Endothelial cell of umbilical vein (primary cell): ENCODE measurements at regions of chr2 and their contacts with region 1.

Region 1: GRCh38 chr2:10434886-10435819 is 13.0 kb downstream of the ODC1 start:
- DNase-seq: peak; percentile 74
- H3K4me3 ChIP-seq: no peak overlapping the region
- H3K27ac ChIP-seq: no peak overlapping the region
- H3K4me1 ChIP-seq: no peaks in the 10 kb centered on the region
- H3K27me3 ChIP-seq: no peaks in the 10 kb centered on the region
- CTCF ChIP-seq: peak; percentile 96
- POLR2A ChIP-seq: no peak

Region 2: GRCh38 chr2:9984217-9984739 is 450.9 kb before region 1 on chr2:
- CTCF ChIA-PET with region 1: interaction called, 20 read pairs
- POLR2A ChIA-PET with region 1: no interaction called
- dilution Hi-C with region 1: no loop called
- intact Hi-C with region 1: no loop called
- DNase-seq: peak; percentile 73
- H3K4me3 ChIP-seq: no peak overlapping the region
- H3K27ac ChIP-seq: no peak overlapping the region
- H3K4me1 ChIP-seq: peaks cover 5% of the 10 kb centered on the region
- H3K27me3 ChIP-seq: no peaks in the 10 kb centered on the region
- CTCF ChIP-seq: peak; percentile 46 to 60
- POLR2A ChIP-seq: no peak

Region 3: GRCh38 chr2:10072656-10073480 is 362.3 kb before region 1 on chr2:
- CTCF ChIA-PET with region 1: interaction called, 565 read pairs
- POLR2A ChIA-PET with region 1: interaction called, 6 read pairs
- dilution Hi-C with region 1: no loop called
- intact Hi-C with region 1: loop called (anchors 1 kb)
- DNase-seq: peak; percentile 76
- H3K4me3 ChIP-seq: no peak overlapping the region
- H3K27ac ChIP-seq: no peak overlapping the region
- H3K4me1 ChIP-seq: no peaks in the 10 kb centered on the region
- H3K27me3 ChIP-seq: peaks cover 11 to 14% of the 10 kb centered on the region in 2 experiments
- CTCF ChIP-seq: peak; percentile 87 to 90
- POLR2A ChIP-seq: no peak

Region 4: DNA sequence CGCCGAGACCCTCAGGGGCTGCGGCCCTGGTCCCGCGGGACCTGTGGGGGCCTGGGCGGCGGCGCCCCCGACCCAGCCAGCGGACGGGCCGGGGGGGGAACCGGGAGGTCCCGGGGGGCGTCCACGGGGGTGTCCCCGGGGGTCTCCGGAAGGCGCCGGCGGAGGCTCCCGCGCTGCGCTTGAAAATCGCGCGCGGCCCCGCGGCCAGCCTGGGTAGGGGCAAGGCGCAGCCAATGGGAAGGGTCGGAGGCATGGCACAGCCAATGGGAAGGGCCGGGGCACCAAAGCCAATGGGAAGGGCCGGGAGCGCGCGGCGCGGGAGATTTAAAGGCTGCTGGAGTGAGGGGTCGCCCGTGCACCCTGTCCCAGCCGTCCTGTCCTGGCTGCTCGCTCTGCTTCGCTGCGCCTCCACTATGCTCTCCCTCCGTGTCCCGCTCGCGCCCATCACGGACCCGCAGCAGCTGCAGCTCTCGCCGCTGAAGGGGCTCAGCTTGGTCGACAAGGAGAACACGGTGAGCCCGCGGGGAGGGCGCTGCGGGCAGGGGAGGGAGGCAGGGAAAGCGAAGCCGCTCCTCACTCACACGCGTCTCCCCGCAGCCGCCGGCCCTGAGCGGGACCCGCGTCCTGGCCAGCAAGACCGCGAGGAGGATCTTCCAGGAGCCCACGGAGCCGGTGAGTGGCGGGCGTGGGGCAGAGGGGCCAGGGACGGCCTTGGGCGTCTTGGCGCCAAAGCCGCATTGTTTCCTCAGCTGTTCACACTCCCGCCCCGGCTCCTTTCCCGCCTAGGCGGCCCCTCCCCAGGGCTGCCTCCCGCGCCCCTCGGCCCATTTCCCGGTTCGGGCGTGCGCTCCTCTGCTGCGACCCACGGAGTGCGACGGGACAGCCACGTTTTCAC is 312.5 kb before region 1 on chr2 and contains the start of gene RRM2:
- CTCF ChIA-PET with region 1: interaction called, 299 read pairs
- POLR2A ChIA-PET with region 1: interaction called, 3 read pairs
- dilution Hi-C with region 1: no loop called
- intact Hi-C with region 1: loop called (anchors 1 kb)
- DNase-seq: peak; percentile 88
- H3K4me3 ChIP-seq: peak within 1 kb of the TSS; percentile 59 to 91 (median 70)
- H3K27ac ChIP-seq: peak within 1 kb of the TSS; percentile 60
- H3K4me1 ChIP-seq: peaks cover 53% of the 10 kb centered on the region
- H3K27me3 ChIP-seq: no peaks in the 10 kb centered on the region
- CTCF ChIP-seq: no peak
- POLR2A ChIP-seq: peak; percentile 93
- total RNA-seq, gene RRM2: 220 and 246 TPM in 2 replicates

Region 5: DNA sequence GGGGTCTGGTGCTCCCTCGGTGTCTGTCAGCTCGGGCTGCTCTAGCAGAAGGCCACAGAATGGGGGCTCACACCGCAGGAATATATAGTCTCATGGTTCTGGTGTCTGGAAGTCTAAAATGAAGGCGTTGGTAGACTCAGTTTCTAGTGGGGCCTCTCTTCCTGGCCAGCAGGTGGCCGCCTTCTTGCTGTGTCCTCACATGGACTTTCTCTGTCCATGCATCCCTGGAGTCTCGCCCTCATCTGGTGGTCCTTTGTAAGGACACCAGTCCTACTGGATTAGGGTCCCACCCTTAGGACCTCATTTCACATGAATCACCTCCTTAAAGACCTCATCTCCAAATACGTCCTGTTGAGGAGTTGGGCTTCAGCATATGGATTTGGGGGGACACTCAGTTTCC is 246.9 kb before region 1 on chr2:
- CTCF ChIA-PET with region 1: interaction called, 13 read pairs
- POLR2A ChIA-PET with region 1: no interaction called
- dilution Hi-C with region 1: no loop called
- intact Hi-C with region 1: no loop called
- DNase-seq: peak; percentile 33
- H3K4me3 ChIP-seq: no peak overlapping the region
- H3K27ac ChIP-seq: no peak overlapping the region
- H3K4me1 ChIP-seq: no peaks in the 10 kb centered on the region
- H3K27me3 ChIP-seq: no peaks in the 10 kb centered on the region
- CTCF ChIP-seq: peak; percentile 52 to 66
- POLR2A ChIP-seq: no peak

Region 6: DNA sequence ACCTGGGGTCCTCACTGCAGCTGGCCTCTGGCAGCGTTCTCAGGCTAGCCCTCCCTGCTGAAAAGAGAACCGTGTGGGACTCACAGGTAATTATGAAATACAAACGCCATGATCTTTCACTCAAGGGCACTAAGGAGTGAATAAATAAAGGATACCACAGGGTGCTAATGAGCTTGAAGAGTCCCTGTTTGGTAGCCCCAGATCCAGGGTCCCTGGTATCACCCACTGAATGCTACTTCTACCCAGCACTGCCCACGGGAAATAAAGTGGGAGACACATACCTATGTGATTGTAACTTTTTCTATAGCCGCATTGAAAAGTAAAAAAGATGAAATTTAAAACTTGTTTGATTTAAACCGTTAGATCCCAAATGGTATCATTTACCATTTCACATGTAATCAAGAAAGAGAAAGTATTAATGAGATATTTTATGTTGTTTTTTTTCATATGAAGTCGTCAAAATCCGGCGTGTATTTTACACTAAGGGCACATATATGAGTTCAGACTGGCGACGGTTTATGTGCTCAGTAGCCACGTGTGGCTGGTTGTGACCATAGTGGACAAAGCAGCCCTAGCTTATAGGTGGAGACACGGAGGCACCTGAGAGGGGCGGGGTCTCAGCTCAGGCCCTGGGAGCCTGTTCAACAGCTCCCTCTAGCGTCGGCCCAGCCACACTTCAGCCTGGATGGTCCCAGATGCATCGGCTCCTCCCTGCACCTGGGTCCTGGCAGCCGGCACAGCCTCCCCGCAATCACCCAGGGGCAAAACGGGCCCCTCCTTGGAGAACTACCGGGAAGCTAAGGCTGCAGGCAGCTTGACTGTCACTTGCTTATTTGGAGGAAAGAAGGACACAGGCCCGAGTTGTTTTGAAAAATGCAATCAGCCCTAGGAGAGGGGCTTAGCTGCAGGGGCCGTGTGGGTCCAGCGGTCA is 26.2 kb before region 1 on chr2:
- CTCF ChIA-PET with region 1: interaction called, 45 read pairs
- POLR2A ChIA-PET with region 1: no interaction called
- dilution Hi-C with region 1: no loop called
- intact Hi-C with region 1: loop called (anchors 1 kb)
- DNase-seq: peak; percentile 75
- H3K4me3 ChIP-seq: no peak overlapping the region
- H3K27ac ChIP-seq: peak overlapping the region; percentile 74
- H3K4me1 ChIP-seq: peaks cover 52% of the 10 kb centered on the region
- H3K27me3 ChIP-seq: no peaks in the 10 kb centered on the region
- CTCF ChIP-seq: peak; percentile 94 to 96
- POLR2A ChIP-seq: no peak

Region 7: DNA sequence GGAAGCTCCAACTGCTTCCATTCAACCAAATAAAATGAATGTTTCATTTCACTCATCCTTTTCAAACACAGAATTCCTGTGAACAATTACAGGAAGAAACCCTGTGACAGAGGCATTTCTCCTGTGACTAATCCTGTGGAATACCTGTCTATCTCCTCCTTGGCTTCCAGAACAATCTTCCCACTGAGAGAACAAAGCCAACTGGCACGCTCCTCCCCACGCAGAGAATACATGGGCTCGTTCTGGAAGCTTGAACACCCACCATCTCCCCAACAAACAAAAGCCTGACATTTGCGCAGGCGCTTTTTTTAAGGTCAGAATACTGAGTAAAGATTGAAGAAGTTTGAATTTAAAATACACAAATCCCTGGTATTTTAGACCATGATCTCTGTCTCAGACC is 615.4 kb after region 1 on chr2:
- CTCF ChIA-PET with region 1: no interaction called
- POLR2A ChIA-PET with region 1: no interaction called
- dilution Hi-C with region 1: no loop called
- intact Hi-C with region 1: no loop called
- DNase-seq: no peak
- H3K4me3 ChIP-seq: no peak overlapping the region
- H3K27ac ChIP-seq: no peak overlapping the region
- H3K4me1 ChIP-seq: no peaks in the 10 kb centered on the region
- H3K27me3 ChIP-seq: peaks cover 0 to 3% of the 10 kb centered on the region in 2 experiments
- CTCF ChIP-seq: no peak
- POLR2A ChIP-seq: no peak